SK-N-SH (cell line): ENCODE measurements at regions of chr5 and their contacts with region 1.

Region 1: GRCh38 chr5:9207817-9208418 is 338.0 kb downstream of the SEMA5A start:
- DNase-seq: peak; percentile 32
- H3K4me3 ChIP-seq: no peak overlapping the region; a peak in 1 of 4 replicates
- H3K27ac ChIP-seq: no peak overlapping the region
- H3K4me1 ChIP-seq: no peaks in the 10 kb centered on the region
- H3K27me3 ChIP-seq: no peaks in the 10 kb centered on the region
- CTCF ChIP-seq: peak; percentile 79
- EP300 ChIP-seq: no peak
- RAD21 ChIP-seq: peak; percentile 84

Region 2: DNA sequence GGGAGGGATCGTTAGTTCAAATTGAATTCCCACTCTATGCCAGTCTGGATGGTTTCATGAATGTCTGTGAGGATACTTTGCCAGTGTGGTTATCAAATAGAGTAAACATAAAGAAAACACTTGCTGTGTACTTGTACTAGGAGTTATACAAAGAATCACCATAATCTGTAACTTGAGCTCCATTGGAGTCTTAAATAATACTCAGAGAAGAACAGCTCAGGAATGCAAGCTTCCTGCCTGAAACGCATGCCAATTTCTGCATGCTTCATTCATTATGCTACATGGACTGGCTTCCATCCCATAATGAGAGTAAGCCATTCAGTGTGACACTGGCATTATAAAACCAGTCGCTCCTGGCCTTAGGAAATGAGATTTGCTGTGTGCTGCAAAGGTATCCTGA is 13.4 kb before region 1 on chr5:
- CTCF ChIA-PET with region 1: interaction called, 11 read pairs
- POLR2A ChIA-PET with region 1: no interaction called
- DNase-seq: peak; percentile 45
- H3K4me3 ChIP-seq: no peak overlapping the region
- H3K27ac ChIP-seq: peak overlapping the region in 1 of 2 experiments; percentile 58; a peak in 1 of 4 replicates
- H3K4me1 ChIP-seq: peaks cover 0 to 4% of the 10 kb centered on the region in 2 experiments; a peak in 2 of 4 replicates
- H3K27me3 ChIP-seq: no peaks in the 10 kb centered on the region
- CTCF ChIP-seq: no peak
- EP300 ChIP-seq: peak in 1 of 2 experiments; percentile 28; a peak in 1 of 4 replicates
- RAD21 ChIP-seq: no peak

Region 3: GRCh38 chr5:9544502-9545135 is 336.7 kb after region 1 on chr5:
- CTCF ChIA-PET with region 1: interaction called, 10 read pairs
- POLR2A ChIA-PET with region 1: no interaction called
- DNase-seq: peak; percentile 85
- H3K4me3 ChIP-seq: peak overlapping the region; percentile 66 to 68
- H3K27ac ChIP-seq: peak overlapping the region; percentile 46 to 83; a peak in 2 of 4 replicates
- H3K4me1 ChIP-seq: peaks cover 4 to 19% of the 10 kb centered on the region in 2 experiments; a peak in 3 of 4 replicates
- H3K27me3 ChIP-seq: peaks cover 6% of the 10 kb centered on the region; the same call in 1 of the 2 replicates
- CTCF ChIP-seq: peak; percentile 94
- EP300 ChIP-seq: no peak
- RAD21 ChIP-seq: peak; percentile 86